CD8-positive, alpha-beta memory T cell (primary cell): ENCODE measurements at regions of chr2 and their contacts with region 1.

Region 1: GRCh38 chr2:88059979-88060906 is 4.7 kb upstream of the KRCC1 start:
- DNase-seq: peak in 3 of 5 donors; percentile 40 to 57 (median 49)
- H3K4me3 ChIP-seq: no peak overlapping the region
- H3K4me3 Mint-ChIP-seq: no peak overlapping the region
- H3K27ac ChIP-seq: no peak overlapping the region
- H3K27ac Mint-ChIP-seq: peak overlapping the region in 1 of 8 donors; percentile 43
- H3K4me1 ChIP-seq: peaks cover 6% of the 10 kb centered on the region
- H3K4me1 Mint-ChIP-seq: peaks cover 7 to 9% (median 8%) of the 10 kb centered on the region in 3 donors
- H3K27me3 ChIP-seq: no peaks in the 10 kb centered on the region
- H3K27me3 Mint-ChIP-seq: no peaks in the 10 kb centered on the region

Region 2: DNA sequence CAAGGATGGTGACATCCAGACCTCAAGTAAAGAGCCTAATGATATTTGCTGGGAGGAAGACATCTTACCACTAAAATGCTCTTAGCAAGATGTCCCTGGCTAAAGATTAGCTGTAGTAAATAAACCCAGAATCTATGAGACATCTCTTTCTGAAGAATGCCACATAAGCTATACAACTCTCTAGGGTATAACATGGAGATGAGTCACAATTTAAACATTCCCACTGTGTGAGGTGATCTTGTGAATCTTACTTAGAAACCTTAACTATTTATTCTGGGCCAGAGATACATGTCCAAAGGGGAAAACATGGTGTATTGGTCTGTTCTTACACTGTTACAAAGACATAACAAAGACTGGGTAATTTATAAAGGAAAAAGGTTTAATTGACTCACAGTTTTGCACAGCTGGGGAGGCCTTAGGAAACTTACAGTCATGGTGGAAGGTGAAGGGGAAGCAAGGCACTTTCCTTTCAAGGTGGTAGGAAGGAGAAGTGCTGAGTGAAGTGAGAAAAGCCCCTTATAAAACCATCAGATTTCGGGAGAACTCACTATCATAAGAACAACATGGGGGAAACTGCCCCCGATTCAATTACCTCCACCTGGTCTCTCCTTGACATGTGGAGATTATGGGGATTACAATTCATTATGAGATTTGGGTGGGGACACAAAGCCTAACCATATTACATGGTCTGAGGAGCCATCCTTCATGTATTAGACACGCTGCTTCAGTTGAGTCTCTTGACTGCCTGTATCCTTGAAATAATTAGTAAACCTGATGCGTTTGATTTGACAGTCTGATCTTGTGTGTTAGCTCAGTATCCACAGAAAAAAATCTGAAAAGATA is 21.8 kb before region 1 on chr2:
- CTCF ChIA-PET with region 1: no interaction called
- POLR2A ChIA-PET with region 1: no interaction called
- DNase-seq: no peak
- H3K4me3 ChIP-seq: no peak overlapping the region
- H3K4me3 Mint-ChIP-seq: no peak overlapping the region
- H3K27ac ChIP-seq: no peak overlapping the region
- H3K27ac Mint-ChIP-seq: peak overlapping the region in 1 of 8 donors; percentile 41
- H3K4me1 ChIP-seq: no peaks in the 10 kb centered on the region
- H3K4me1 Mint-ChIP-seq: peaks cover 38 to 74% (median 66%) of the 10 kb centered on the region in 3 donors
- H3K27me3 ChIP-seq: no peaks in the 10 kb centered on the region
- H3K27me3 Mint-ChIP-seq: peaks cover 0 to 2% of the 10 kb centered on the region in 2 donors

Region 3: DNA sequence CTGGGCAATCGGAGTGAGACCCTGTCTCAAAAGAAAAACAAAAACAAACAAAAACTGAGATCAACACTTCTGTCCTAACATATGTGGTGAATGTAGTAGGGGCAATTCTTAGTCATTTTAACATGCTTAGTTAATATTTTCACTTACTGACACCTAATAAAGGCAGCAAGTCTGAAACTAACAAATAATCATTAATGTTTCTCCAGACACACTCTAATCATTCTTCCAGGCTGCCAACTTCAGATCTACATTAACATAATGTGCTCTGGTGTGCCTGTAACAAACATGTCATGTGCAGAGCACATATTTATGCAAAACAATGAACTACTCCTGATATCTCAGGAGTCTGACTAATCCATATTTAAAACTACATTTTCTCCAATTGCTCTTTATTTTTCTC is 10.6 kb before region 1 on chr2:
- CTCF ChIA-PET with region 1: interaction called, 18 read pairs
- POLR2A ChIA-PET with region 1: interaction called, 7 read pairs
- DNase-seq: no peak
- H3K4me3 ChIP-seq: no peak overlapping the region
- H3K4me3 Mint-ChIP-seq: peak overlapping the region in 1 of 7 donors; percentile 27
- H3K27ac ChIP-seq: no peak overlapping the region
- H3K27ac Mint-ChIP-seq: peak overlapping the region in 5 of 8 donors; percentile 2 to 46 (median 23)
- H3K4me1 ChIP-seq: peaks cover 19% of the 10 kb centered on the region
- H3K4me1 Mint-ChIP-seq: peaks cover 38 to 69% (median 62%) of the 10 kb centered on the region in 3 donors
- H3K27me3 ChIP-seq: no peaks in the 10 kb centered on the region
- H3K27me3 Mint-ChIP-seq: no peaks in the 10 kb centered on the region

Region 4: DNA sequence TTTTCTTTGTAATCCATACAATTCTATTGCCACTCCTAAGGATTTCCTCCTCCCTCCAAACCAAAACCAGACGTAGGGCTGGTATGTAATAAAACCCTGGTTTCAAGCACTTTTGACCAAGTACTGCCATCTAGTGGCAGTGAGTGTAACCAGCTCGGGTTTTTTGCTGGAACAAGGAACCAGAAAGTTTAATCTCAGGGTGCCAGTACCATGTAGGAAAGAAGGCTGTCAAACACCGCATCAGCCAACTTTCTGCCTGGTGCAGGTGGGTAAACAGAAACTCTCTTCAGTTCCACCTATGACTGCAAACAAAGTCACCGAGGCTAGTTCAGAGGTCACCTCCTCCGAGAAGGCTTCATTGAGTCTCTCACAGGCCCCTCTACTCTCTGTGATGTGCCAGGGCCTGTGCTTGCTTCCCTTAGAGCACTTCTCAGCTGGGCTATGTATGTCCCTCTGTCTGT is 99.7 kb after region 1 on chr2:
- CTCF ChIA-PET with region 1: interaction called, 34 read pairs
- POLR2A ChIA-PET with region 1: no interaction called
- DNase-seq: peak; percentile 5 to 70 (median 37)
- H3K4me3 ChIP-seq: no peak overlapping the region
- H3K4me3 Mint-ChIP-seq: no peak overlapping the region
- H3K27ac ChIP-seq: no peak overlapping the region
- H3K27ac Mint-ChIP-seq: no peak overlapping the region
- H3K4me1 ChIP-seq: no peaks in the 10 kb centered on the region
- H3K4me1 Mint-ChIP-seq: no peaks in the 10 kb centered on the region
- H3K27me3 ChIP-seq: no peaks in the 10 kb centered on the region
- H3K27me3 Mint-ChIP-seq: peaks cover 2 to 4% of the 10 kb centered on the region in 2 donors